ENCODE measurements at regions of chr9 and their contacts with region 1.

Region 1: GRCh38 chr9:112898872-112899311 is 8.2 kb upstream of the SLC46A2 start:
- DNase-seq: no peak
- H3K4me3 Mint-ChIP-seq: no peak overlapping the region
- H3K27ac Mint-ChIP-seq: no peak overlapping the region
- H3K4me1 Mint-ChIP-seq: peaks cover 31% of the 10 kb centered on the region
- H3K27me3 Mint-ChIP-seq: peaks cover 32% of the 10 kb centered on the region

Region 2: GRCh38 chr9:112844771-112845542 is 53.9 kb before region 1 on chr9:
- intact Hi-C with region 1: loop called (anchors 1 kb)
- DNase-seq: peak; percentile 63
- H3K4me3 Mint-ChIP-seq: no peak overlapping the region
- H3K27ac Mint-ChIP-seq: no peak overlapping the region
- H3K4me1 Mint-ChIP-seq: peaks cover 20% of the 10 kb centered on the region
- H3K27me3 Mint-ChIP-seq: peaks cover 4% of the 10 kb centered on the region

Measured in activated T-helper 1 cell treated with anti-CD3 and anti-CD28 coated beads, Interleukin-12 subunit alpha, Interleukin-12 subunit beta, Interleukin-2, Interleukin-4 antibody, amounts not matched to agents 30 ng/mL and 10 ng/mL and 1 ng/mL, durations not matched to agents 14 hours and 24 hours and 36 hours (primary cell).